ENCODE measurements at regions of chr21 and their contacts with region 1.

Region 1: DNA sequence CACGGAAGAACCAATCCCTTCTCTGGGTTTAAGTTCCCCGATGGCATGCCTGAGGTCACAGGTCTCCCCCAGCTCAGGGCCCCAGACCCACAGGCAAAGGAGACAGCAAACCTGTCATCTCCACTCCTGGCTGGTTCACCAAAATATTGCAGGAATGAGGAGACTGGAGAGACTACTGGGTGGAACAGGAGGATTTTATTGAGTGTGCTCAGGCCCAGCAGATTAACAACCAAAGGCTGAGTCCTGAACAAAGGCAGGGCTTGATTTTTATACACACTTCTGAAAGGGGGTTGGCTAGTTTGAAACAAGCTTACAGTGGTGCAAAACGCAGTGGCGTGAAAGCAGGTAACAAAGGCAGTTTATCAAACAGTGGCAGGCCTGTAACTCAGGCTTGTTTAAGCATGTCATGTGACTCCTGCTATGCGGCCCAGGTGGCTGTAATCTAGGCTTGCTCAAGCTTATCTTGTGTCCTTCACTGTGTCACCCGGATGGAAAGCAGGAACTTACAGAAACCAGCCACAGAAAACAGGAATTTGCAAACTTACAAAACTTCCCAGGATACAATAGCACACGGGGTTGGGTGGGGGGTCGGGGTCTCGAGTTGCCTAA is 27.4 kb upstream of the KCNJ15 start:
- DNase-seq: no peak
- H3K4me3 ChIP-seq: no peak overlapping the region
- H3K27ac ChIP-seq: no peak overlapping the region
- H3K4me1 ChIP-seq: no peaks in the 10 kb centered on the region
- H3K27me3 ChIP-seq: no peaks in the 10 kb centered on the region
- CTCF ChIP-seq: no peak
- POLR2A ChIP-seq: no peak

Region 2: DNA sequence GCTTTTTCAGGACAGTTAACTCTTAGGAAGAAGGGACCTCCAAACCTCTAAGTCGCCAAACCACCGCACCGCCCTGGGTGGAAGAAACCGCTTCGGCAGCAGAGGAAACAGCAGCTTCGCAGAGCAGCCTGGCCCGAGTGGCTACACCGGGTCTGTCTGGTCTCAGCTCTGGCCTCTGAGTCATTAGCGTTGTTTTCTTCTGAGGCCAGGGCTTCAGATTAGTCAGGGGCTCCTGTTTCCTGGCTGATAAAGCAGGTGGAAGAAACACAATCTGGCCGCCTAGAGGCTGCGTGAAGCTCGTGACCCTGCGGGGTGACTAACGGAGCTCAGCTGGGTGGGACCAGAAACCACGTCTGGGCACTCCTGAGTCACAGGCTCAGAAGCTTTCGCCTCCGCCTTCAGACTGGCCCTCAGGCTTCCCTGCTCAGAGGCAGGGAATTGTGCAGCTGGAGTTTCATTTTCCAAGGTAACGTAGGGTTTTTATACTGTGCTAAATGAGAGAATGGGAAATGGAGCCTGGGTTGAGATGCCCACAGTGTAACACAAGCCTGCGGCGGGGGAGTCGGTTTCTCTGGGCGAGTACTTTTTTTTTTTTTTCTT is 1799.3 kb before region 1 on chr21:
- intact Hi-C with region 1: loop called in 1 of 2 experiments (anchors 5 kb)
- DNase-seq: peak; percentile 86 to 97 (median 95)
- H3K4me3 ChIP-seq: peak overlapping the region in 2 of 4 donors; percentile 21 to 45
- H3K27ac ChIP-seq: peak overlapping the region in 4 of 5 donors; percentile 64 to 88 (median 82)
- H3K4me1 ChIP-seq: peaks cover 0 to 18% of the 10 kb centered on the region in 2 donors
- H3K27me3 ChIP-seq: no peaks in the 10 kb centered on the region
- CTCF ChIP-seq: peak in 3 of 6 experiments; percentile 30 to 37 (median 30)
- POLR2A ChIP-seq: peak; percentile 49 to 96

Region 3: GRCh38 chr21:37904856-37905255 is 324.5 kb before region 1 on chr21:
- intact Hi-C with region 1: no loop called
- DNase-seq: no peak
- H3K4me3 ChIP-seq: no peak overlapping the region
- H3K27ac ChIP-seq: no peak overlapping the region
- H3K4me1 ChIP-seq: no peaks in the 10 kb centered on the region
- H3K27me3 ChIP-seq: peaks cover 6% of the 10 kb centered on the region
- CTCF ChIP-seq: no peak
- POLR2A ChIP-seq: no peak

Measured in adrenal gland (tissue), 19 donors.